Posterior vena cava (tissue), 2 donors: ENCODE measurements at regions of chr19 and their contacts with region 1.

Region 1: GRCh38 chr19:8858260-8858659 is 26.1 kb downstream of the MBD3L1 start:
- DNase-seq: no peak

Region 2: DNA sequence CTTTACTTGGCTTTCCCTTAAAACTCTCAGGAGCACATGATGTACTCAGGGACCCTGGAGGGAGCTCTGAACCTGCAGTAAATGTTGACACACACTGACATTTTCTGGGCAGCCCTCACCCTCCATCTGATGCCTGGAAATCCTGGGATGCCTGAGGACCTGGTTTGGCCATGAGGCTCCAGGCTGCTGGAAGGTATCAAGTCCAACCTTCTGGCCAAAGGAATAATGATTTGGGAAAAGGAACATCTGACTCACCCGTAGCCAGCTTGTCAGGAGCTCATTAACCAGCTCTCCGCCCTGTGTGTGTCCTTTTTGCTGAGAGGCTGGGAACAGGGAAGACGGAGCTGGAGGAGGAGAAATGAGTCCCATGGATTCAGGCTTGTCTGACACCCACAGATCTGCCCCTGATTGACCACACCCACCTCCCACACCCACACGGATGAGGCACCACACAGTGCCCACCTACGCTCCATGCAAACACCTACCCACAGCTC is 36.5 kb before region 1 on chr19:
- intact Hi-C with region 1: no loop called
- DNase-seq: no peak

Region 3: GRCh38 chr19:8890260-8890659 is 32.0 kb after region 1 on chr19:
- intact Hi-C with region 1: loop called in 1 of 2 experiments (anchors 1 kb)
- DNase-seq: no peak